ENCODE measurements at regions of chr9 and their contacts with region 1.

Region 1: DNA sequence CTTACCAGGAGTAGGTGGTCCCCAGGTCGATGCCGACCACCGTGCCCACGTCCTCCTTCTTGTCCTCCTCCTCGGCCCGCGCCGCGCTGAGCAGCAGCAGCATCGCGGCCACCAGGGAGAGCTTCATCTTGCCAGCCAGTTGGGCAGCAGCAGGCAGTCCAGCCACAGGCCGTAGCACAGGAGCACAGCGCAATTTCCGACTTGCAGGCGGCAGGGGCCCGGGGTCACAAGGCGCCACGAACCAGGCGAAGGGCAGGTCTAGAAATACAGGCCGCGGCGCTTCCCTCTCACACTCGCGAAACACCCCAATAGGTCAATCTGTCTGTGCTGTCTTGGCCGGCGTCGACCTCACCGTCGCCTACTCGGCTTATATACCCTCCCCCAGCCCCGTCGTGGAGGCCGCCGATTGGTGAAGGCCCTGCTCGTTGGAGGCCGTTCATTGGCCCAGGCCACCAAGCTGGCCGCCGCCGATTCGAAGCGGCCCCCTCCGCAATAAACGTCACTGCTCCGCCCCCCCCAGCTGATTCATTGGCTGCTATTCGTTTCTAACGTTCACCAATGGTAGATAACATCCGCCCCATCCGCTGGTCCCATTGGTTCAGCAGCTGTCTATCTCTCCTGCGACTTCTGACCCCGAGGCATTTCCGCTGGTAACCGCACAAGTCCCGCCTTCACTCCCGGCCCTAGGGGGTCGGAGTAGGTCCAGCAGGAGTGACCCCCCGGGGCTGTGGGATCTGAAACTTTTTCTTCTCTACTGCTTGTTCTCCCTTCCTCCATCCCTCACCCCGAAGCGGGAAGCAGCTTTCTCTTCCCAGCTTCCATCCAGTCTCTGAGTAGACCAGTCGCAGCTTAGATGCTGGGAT is at the start of gene HSPA5:
- DNase-seq: peak; percentile 100
- H3K4me3 ChIP-seq: peak within 1 kb of the TSS; percentile 85 to 93
- H3K27ac ChIP-seq: peak within 1 kb of the TSS; percentile 81 to 94
- H3K4me1 ChIP-seq: peaks cover 4% of the 10 kb centered on the region
- H3K27me3 ChIP-seq: no peaks in the 10 kb centered on the region
- CTCF ChIP-seq: peak in 2 of 4 experiments; percentile 30 to 35
- POLR2A ChIP-seq: peak; percentile 97
- total RNA-seq, gene HSPA5: 215 to 303 TPM

Region 2: DNA sequence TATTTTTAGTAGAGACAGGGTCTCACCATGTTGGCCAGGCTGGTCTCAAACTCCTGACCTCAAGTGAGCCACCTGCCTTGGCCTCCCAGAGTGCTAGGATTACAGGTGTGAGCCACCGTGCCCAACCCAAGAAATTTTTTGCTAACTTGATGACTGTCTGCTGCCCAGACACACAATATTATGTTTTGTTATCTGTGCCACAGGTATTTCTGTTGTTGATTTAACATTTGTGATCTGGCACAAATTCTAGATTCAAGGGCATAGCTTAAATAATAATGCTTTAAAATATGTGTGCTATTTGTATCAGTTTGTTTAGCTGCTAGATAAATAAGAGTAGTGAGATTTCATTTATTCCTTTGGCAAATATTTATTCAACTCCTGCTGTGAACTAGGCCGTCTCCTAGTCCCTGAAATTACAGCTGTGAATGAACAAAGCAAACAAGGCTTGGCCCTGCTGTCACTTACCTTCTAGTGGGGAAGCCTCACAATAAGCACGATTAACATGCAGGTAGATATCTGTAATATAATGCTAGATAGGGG is 55.7 kb after region 1 on chr9:
- intact Hi-C with region 1: no loop called
- DNase-seq: peak; percentile 20
- H3K4me3 ChIP-seq: no peak overlapping the region
- H3K27ac ChIP-seq: no peak overlapping the region
- H3K4me1 ChIP-seq: no peaks in the 10 kb centered on the region
- H3K27me3 ChIP-seq: no peaks in the 10 kb centered on the region
- CTCF ChIP-seq: no peak
- POLR2A ChIP-seq: no peak

Region 3: GRCh38 chr9:125343518-125344275 is 102.5 kb after region 1 on chr9:
- intact Hi-C with region 1: loop called (anchors 10 kb)
- DNase-seq: no peak
- H3K4me3 ChIP-seq: no peak overlapping the region
- H3K27ac ChIP-seq: no peak overlapping the region
- H3K4me1 ChIP-seq: no peaks in the 10 kb centered on the region
- H3K27me3 ChIP-seq: no peaks in the 10 kb centered on the region
- CTCF ChIP-seq: no peak
- POLR2A ChIP-seq: no peak

Measured in prostate gland (tissue), 2 donors.